ENCODE measurements at regions of chr4 and their contacts with region 1.

Region 1: GRCh38 chr4:55554453-55555030 is 7.8 kb upstream of the CLOCK start:
- DNase-seq: no peak

Region 2: GRCh38 chr4:54971474-54971950 is 583.0 kb before region 1 on chr4:
- intact Hi-C with region 1: loop called (anchors 10 kb)
- DNase-seq: peak in 1 of 10 donors; percentile 15

Region 3: DNA sequence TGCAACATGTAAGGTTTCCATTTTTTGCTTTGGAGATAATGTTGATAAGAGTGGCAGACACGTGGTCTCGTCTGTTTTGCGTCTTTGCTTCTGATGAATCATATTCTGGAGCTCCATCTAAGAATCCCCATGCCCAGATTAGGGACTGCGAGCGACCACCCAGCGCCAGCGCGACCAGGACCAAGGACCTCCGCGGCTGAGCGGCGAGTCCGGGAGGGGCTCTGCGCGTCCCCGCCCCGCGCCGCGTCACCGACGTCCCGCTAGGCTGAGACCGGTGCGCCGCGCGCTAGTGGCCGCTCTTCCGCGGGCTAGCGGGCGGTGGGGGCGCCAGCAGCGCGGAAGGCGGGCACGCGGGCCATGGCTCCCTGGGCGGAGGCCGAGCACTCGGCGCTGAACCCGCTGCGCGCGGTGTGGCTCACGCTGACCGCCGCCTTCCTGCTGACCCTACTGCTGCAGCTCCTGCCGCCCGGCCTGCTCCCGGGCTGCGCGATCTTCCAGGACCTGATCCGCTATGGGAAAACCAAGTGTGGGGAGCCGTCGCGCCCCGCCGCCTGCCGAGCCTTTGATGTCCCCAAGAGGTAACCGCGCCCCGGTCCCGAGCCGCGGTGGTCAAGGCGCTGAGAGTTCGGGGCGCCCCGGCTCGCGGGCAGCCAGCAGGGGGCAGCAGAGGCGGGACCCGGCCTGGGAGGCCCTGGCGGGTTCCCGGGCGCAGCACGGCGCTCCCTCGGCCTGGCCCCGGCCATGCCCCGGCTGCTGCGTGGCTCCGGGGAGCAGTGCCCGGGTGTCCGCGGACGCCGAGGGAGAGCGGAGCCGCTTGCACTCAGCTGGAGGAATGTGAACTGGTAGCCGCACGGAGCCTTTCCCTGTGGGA is 208.3 kb before region 1 on chr4 and contains the start of gene SRD5A3:
- intact Hi-C with region 1: loop called (anchors 2 kb)
- DNase-seq: peak; percentile 67 to 97 (median 80)